ENCODE measurements at regions of chr1 and their contacts with region 1.

Region 1: GRCh38 chr1:9004700-9005394 is 21.4 kb downstream of the SLC2A7 start:
- DNase-seq: peak; percentile 91
- H3K4me3 ChIP-seq: no peak overlapping the region
- H3K27ac ChIP-seq: no peak overlapping the region
- H3K4me1 ChIP-seq: no peaks in the 10 kb centered on the region
- H3K27me3 ChIP-seq: no peaks in the 10 kb centered on the region
- CTCF ChIP-seq: peak; percentile 82 to 93 (median 91)
- POLR2A ChIP-seq: no peak

Region 2: GRCh38 chr1:9099555-9099954 is 94.7 kb after region 1 on chr1:
- intact Hi-C with region 1: loop called (anchors 10 kb)
- DNase-seq: no peak
- H3K4me3 ChIP-seq: no peak overlapping the region
- H3K27ac ChIP-seq: no peak overlapping the region
- H3K4me1 ChIP-seq: no peaks in the 10 kb centered on the region
- H3K27me3 ChIP-seq: no peaks in the 10 kb centered on the region
- CTCF ChIP-seq: no peak
- POLR2A ChIP-seq: no peak

Region 3: DNA sequence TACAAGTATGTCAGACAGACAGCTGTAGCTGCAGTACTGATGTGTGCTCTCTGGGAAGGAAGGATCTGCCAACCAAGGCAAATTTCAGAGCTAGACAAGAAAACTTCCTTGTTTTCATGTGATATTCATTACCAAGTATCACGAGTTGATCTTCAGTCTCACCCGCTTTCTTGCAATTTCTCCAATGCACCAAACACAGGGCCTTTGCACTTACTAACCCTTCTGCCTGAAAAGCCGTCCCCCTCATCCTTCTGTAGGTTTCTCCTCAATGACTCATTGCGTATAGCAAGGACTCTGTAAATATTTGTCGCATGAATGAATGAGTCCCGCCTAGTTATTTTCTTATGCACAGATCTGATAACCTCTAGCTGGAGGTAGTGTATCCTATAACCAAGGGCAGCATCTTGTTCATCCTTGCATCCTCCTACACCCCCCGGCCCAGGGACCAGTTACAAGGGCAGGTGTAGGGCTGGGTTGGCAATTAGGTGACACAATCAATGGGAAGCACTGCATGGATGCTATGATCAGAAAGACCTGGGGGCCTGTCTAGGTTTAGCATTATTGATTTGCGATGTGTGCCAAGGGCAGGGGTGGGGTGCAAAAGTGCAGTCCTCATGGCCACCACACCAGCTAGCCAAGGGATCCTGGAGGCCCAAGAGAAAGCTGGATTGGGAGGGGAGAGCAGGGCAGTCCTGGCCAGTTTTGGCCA is 175.4 kb after region 1 on chr1:
- intact Hi-C with region 1: no loop called
- DNase-seq: no peak
- H3K4me3 ChIP-seq: no peak overlapping the region
- H3K27ac ChIP-seq: peak overlapping the region in 1 of 2 donors; percentile 83
- H3K4me1 ChIP-seq: peaks cover 9% of the 10 kb centered on the region
- H3K27me3 ChIP-seq: no peaks in the 10 kb centered on the region
- CTCF ChIP-seq: no peak
- POLR2A ChIP-seq: no peak

Measured in testis (tissue), 5 donors.